ENCODE measurements at regions of chr10 and their contacts with region 1.

Region 1: DNA sequence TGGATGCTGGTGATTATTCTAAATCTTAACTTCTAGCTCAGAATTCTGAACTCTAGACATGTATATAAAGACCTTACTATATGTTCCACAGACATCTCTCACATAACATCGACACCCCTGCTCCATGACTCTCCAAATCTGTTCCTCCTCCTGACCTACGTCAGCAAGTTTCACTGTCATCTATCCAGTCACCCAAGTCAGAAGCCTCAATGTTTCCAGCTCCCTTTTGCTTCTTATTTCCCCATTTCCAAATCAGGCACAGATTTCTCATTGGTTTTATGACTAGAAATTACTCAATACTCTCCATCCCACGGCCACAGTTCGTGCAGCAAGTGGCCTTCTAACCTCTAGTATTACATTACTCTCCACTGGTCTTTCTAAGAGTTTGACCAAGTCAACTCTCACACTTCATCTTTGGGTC is 28.5 kb downstream of the EPC1 start:
- DNase-seq: peak; percentile 51
- ATAC-seq: peak; percentile 46
- H3K4me3 ChIP-seq: peak overlapping the region in 1 of 5 experiments; percentile 20
- H3K4me3 Mint-ChIP-seq: peak overlapping the region; percentile 64
- H3K27ac ChIP-seq: peak overlapping the region; percentile 40 to 66
- H3K27ac Mint-ChIP-seq: peak overlapping the region; percentile 74
- H3K4me1 ChIP-seq: peaks cover 59 to 76% of the 10 kb centered on the region in 2 donors
- H3K4me1 Mint-ChIP-seq: peaks cover 83% of the 10 kb centered on the region
- H3K27me3 ChIP-seq: no peaks in the 10 kb centered on the region
- H3K27me3 Mint-ChIP-seq: no peaks in the 10 kb centered on the region
- CTCF ChIP-seq: no peak

Region 2: DNA sequence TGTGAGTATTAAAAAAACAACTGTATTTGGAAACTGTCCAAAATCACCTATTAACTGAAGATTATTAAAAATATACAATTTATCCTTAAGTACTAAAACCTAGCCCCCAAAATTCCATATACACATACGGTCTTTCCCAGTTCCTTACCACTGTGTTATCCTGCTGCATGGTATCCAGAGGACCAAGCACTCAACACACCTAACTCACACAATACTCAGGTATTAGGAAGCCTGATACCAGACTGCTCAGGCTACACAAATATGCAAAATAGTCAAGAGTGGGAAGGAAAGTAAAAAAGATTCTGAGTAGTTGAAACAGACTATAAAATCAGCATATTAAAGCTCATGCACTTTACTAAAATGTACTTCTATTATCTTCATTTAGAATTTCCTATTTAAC is 38.7 kb before region 1 on chr10:
- CTCF ChIA-PET with region 1: no interaction called
- POLR2A ChIA-PET with region 1: no interaction called
- intact Hi-C with region 1: loop called (anchors 5 kb)
- DNase-seq: no peak
- ATAC-seq: no peak
- H3K4me3 ChIP-seq: no peak overlapping the region
- H3K4me3 Mint-ChIP-seq: no peak overlapping the region
- H3K27ac ChIP-seq: no peak overlapping the region
- H3K27ac Mint-ChIP-seq: no peak overlapping the region
- H3K4me1 ChIP-seq: no peaks in the 10 kb centered on the region
- H3K4me1 Mint-ChIP-seq: no peaks in the 10 kb centered on the region
- H3K27me3 ChIP-seq: no peaks in the 10 kb centered on the region
- H3K27me3 Mint-ChIP-seq: no peaks in the 10 kb centered on the region
- CTCF ChIP-seq: no peak

Region 3: GRCh38 chr10:32357056-32357735 is 38.7 kb after region 1 on chr10:
- CTCF ChIA-PET with region 1: no interaction called
- POLR2A ChIA-PET with region 1: no interaction called
- intact Hi-C with region 1: no loop called
- DNase-seq: no peak
- ATAC-seq: no peak
- H3K4me3 ChIP-seq: no peak overlapping the region
- H3K4me3 Mint-ChIP-seq: no peak overlapping the region
- H3K27ac ChIP-seq: no peak overlapping the region
- H3K27ac Mint-ChIP-seq: no peak overlapping the region
- H3K4me1 ChIP-seq: peaks cover 11 to 16% of the 10 kb centered on the region in 2 donors
- H3K4me1 Mint-ChIP-seq: peaks cover 39% of the 10 kb centered on the region
- H3K27me3 ChIP-seq: no peaks in the 10 kb centered on the region
- H3K27me3 Mint-ChIP-seq: no peaks in the 10 kb centered on the region
- CTCF ChIP-seq: no peak

Region 4: DNA sequence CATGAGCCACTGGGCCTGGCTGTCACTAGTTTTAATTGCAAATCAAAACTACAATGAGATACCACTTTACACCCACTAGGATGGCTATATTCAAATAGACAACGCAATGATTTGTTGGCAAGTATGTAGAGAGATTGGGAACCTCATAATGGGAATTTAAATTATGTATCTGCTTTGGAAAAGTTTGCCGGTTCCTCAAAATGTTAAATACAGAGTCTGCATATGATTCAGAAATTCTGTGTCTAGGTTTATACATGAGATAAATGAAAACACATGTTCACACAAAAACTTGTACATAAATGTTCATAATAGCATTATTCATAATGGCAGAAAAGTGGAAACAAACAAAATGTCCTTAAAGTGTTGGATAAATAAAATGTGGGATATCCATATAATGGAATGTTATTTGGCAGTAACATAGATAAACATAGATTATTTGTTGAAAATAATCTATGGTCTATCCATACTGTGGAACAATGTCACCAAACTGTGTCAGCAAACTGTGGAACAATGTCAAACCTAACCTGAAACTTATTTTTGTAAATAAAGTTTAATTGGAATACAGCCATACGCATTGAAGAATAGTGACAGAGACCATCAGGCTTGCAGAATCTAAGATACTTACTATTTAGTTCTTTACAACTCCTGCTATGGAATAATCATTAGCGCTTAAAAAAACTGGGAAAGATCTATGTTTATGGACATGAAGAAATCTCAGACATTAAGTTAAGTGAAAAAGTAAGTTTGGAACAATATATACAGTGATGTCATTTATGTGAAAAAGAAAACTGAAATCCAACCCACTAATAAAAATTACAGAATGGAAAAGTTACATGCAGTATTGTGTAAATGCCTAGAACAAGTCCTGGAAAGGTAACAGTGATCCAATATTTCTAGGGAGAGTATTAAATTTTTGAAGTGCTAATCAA is 198.3 kb after region 1 on chr10:
- CTCF ChIA-PET with region 1: no interaction called
- POLR2A ChIA-PET with region 1: no interaction called
- intact Hi-C with region 1: no loop called
- DNase-seq: no peak
- ATAC-seq: no peak
- H3K4me3 ChIP-seq: no peak overlapping the region
- H3K4me3 Mint-ChIP-seq: no peak overlapping the region
- H3K27ac ChIP-seq: no peak overlapping the region
- H3K27ac Mint-ChIP-seq: no peak overlapping the region
- H3K4me1 ChIP-seq: no peaks in the 10 kb centered on the region
- H3K4me1 Mint-ChIP-seq: no peaks in the 10 kb centered on the region
- H3K27me3 ChIP-seq: no peaks in the 10 kb centered on the region
- H3K27me3 Mint-ChIP-seq: no peaks in the 10 kb centered on the region
- CTCF ChIP-seq: no peak

Region 5: DNA sequence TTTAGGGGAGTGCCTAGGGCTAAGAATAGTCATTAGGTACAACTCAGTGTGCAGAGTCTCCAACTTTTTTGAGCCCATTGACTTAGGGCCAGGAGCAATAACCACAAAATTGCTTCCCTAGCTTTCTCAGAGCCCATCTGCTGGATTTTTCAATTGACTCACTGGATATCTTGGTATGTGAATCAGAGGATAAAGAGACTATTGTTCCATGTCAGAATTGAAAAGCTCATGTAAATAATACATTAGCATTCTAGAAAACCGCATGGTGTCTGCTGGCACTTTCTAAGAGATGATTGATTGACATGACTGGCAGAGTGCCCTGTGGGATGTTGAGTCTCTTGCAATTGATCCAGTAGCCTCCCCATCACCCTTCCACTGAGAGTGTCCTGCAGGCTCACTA is 373.7 kb after region 1 on chr10:
- CTCF ChIA-PET with region 1: no interaction called
- POLR2A ChIA-PET with region 1: no interaction called
- intact Hi-C with region 1: no loop called
- DNase-seq: no peak
- ATAC-seq: no peak
- H3K4me3 ChIP-seq: no peak overlapping the region
- H3K4me3 Mint-ChIP-seq: no peak overlapping the region
- H3K27ac ChIP-seq: no peak overlapping the region
- H3K27ac Mint-ChIP-seq: no peak overlapping the region
- H3K4me1 ChIP-seq: no peaks in the 10 kb centered on the region
- H3K4me1 Mint-ChIP-seq: no peaks in the 10 kb centered on the region
- H3K27me3 ChIP-seq: no peaks in the 10 kb centered on the region
- H3K27me3 Mint-ChIP-seq: no peaks in the 10 kb centered on the region
- CTCF ChIP-seq: no peak